Activated naive CD4-positive, alpha-beta T cell treated with anti-CD3 and anti-CD28 coated beads for 36 hours (primary cell): ENCODE measurements at regions of chr17 and their contacts with region 1.

Region 1: GRCh38 chr17:14813649-14814365 is 451.3 kb downstream of the PMP22 start:
- DNase-seq: peak; percentile 42
- H3K4me3 Mint-ChIP-seq: no peak overlapping the region
- H3K27ac Mint-ChIP-seq: no peak overlapping the region
- H3K4me1 Mint-ChIP-seq: peaks cover 8% of the 10 kb centered on the region
- H3K27me3 Mint-ChIP-seq: peaks cover 13% of the 10 kb centered on the region

Region 2: GRCh38 chr17:14308965-14309879 is 504.6 kb before region 1 on chr17:
- CTCF ChIA-PET with region 1: no interaction called
- intact Hi-C with region 1: loop called (anchors 2 kb)
- DNase-seq: peak; percentile 91
- H3K4me3 Mint-ChIP-seq: peak overlapping the region; percentile 72
- H3K27ac Mint-ChIP-seq: peak overlapping the region; percentile 8
- H3K4me1 Mint-ChIP-seq: peaks cover 69% of the 10 kb centered on the region
- H3K27me3 Mint-ChIP-seq: no peaks in the 10 kb centered on the region

Region 3: GRCh38 chr17:14409292-14409691 is 404.5 kb before region 1 on chr17:
- CTCF ChIA-PET with region 1: no interaction called
- intact Hi-C with region 1: loop called (anchors 10 kb)
- DNase-seq: no peak
- H3K4me3 Mint-ChIP-seq: no peak overlapping the region
- H3K27ac Mint-ChIP-seq: no peak overlapping the region
- H3K4me1 Mint-ChIP-seq: peaks cover 12% of the 10 kb centered on the region
- H3K27me3 Mint-ChIP-seq: no peaks in the 10 kb centered on the region

Region 4: GRCh38 chr17:14784997-14785696 is 28.7 kb before region 1 on chr17:
- CTCF ChIA-PET with region 1: no interaction called
- intact Hi-C with region 1: no loop called
- DNase-seq: peak; percentile 47
- H3K4me3 Mint-ChIP-seq: no peak overlapping the region
- H3K27ac Mint-ChIP-seq: no peak overlapping the region
- H3K4me1 Mint-ChIP-seq: no peaks in the 10 kb centered on the region
- H3K27me3 Mint-ChIP-seq: peaks cover 7% of the 10 kb centered on the region

Region 5: DNA sequence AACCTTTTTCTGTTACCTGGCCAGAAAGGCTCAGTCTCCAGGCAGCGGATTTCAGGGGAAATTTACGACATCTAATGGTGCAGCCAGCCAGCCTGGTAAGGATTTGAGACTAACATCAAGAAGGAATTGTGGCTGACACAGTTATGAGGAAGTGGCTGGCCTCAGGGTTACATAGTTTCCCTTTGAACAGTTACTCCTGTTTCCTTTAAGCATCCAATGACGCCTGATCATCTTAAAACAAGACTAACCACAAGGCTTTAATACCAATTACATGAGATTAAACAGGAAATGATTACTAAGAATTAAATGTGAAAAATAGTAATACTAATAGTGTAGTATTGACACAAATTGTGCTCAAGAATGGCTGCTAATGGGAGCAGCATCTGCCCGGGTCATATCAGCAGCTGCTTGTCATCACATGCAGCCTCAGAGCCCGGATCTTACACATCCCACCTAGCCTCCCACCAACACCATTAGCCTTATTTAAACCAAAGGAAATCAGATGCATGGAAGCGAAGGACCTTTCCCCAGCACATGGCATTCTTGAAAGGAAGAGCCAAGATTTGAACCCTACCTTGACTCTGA is 19.5 kb after region 1 on chr17:
- CTCF ChIA-PET with region 1: no interaction called
- intact Hi-C with region 1: loop called (anchors 1 kb)
- DNase-seq: peak; percentile 20
- H3K4me3 Mint-ChIP-seq: no peak overlapping the region
- H3K27ac Mint-ChIP-seq: no peak overlapping the region
- H3K4me1 Mint-ChIP-seq: peaks cover 7% of the 10 kb centered on the region
- H3K27me3 Mint-ChIP-seq: no peaks in the 10 kb centered on the region